Activated naive CD4-positive, alpha-beta T cell treated with anti-CD3 and anti-CD28 coated beads for 36 hours (primary cell): ENCODE measurements at regions of chr14 and their contacts with region 1.

Region 1: DNA sequence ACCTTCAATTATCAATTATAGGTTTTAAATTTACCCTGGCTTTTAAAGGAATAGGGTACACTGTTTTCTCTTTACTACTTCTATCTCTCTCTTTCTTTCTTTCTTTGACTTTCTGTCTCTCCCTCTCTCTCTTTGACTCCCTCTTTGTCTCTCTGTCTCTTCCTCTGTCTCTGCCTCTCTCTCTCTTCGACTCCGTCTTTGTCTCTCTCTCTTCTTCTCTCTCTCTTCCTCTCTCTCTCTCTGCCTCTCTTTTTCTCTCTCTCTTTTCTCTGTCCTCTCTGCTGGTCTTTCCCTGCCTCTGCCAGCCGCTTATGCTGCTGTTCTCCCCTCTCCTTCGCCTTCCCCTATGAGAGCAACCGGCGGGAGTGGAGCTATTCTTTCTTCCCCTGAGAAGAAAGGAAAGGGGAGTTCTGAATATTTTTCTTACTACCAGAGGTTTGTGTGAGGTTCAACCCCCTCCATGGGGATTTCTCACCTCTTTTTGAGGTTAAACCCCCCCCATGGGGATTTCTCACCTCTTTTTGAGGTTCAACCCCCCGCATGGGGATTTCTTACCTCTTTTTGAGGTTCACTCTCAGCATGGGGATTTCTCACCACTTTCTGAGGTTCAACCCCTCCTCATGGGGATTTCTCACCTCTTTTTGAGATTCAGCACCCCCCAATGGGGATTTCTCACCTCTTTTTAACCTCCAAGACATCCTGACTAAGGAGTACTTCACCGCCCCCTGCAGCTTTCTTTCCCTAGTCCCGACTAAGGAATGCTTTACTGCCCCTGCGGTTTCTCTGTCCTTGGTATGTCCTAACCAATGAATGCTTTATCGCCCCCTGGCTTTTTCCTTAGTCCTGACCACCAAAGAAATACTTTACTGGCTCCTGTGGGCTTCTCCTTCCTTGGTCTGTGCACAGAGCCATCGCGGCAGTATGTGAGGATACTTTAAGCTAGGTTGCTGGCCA is 27.4 kb upstream of the DDHD1 start:
- DNase-seq: peak; percentile 86
- H3K4me3 Mint-ChIP-seq: no peak overlapping the region
- H3K27ac Mint-ChIP-seq: peak overlapping the region; percentile 43
- H3K4me1 Mint-ChIP-seq: peaks cover 21% of the 10 kb centered on the region
- H3K27me3 Mint-ChIP-seq: no peaks in the 10 kb centered on the region

Region 2: GRCh38 chr14:52824507-52824906 is 356.0 kb before region 1 on chr14:
- CTCF ChIA-PET with region 1: no interaction called
- intact Hi-C with region 1: loop called (anchors 1 kb)
- DNase-seq: no peak
- H3K4me3 Mint-ChIP-seq: no peak overlapping the region
- H3K27ac Mint-ChIP-seq: no peak overlapping the region
- H3K4me1 Mint-ChIP-seq: peaks cover 2% of the 10 kb centered on the region
- H3K27me3 Mint-ChIP-seq: peaks cover 1% of the 10 kb centered on the region

Region 3: GRCh38 chr14:52950898-52951689 is 229.5 kb before region 1 on chr14 and contains the start of gene FERMT2:
- CTCF ChIA-PET with region 1: no interaction called
- intact Hi-C with region 1: loop called (anchors 1 kb)
- DNase-seq: peak; percentile 25
- H3K4me3 Mint-ChIP-seq: peak within 1 kb of the TSS; percentile 83
- H3K27ac Mint-ChIP-seq: no peak within 1 kb of the TSS
- H3K4me1 Mint-ChIP-seq: peaks cover 31% of the 10 kb centered on the region
- H3K27me3 Mint-ChIP-seq: peaks cover 49% of the 10 kb centered on the region
- total RNA-seq, gene FERMT2: 2.8 to 3.0 TPM

Region 4: DNA sequence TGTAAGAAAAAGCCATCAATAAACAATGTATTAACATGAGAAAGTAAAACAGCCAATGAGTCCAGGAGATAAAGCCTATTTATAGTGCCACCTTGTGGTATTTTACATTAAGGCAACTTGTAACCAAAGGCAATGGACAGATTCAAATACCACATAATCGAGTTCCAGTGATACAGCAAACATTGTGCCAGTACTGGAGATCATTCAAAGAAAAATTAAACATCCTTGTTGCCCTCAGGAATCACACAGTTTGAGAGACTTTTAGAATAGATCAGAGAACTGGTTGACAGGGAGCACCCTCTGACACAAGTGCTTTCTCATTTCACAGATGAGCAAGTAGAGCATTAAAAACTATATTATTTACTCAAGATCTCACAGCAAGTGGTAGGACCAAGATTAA is 125.5 kb before region 1 on chr14:
- CTCF ChIA-PET with region 1: no interaction called
- intact Hi-C with region 1: loop called (anchors 1 kb)
- DNase-seq: no peak
- H3K4me3 Mint-ChIP-seq: no peak overlapping the region
- H3K27ac Mint-ChIP-seq: no peak overlapping the region
- H3K4me1 Mint-ChIP-seq: peaks cover 3% of the 10 kb centered on the region
- H3K27me3 Mint-ChIP-seq: no peaks in the 10 kb centered on the region

Region 5: DNA sequence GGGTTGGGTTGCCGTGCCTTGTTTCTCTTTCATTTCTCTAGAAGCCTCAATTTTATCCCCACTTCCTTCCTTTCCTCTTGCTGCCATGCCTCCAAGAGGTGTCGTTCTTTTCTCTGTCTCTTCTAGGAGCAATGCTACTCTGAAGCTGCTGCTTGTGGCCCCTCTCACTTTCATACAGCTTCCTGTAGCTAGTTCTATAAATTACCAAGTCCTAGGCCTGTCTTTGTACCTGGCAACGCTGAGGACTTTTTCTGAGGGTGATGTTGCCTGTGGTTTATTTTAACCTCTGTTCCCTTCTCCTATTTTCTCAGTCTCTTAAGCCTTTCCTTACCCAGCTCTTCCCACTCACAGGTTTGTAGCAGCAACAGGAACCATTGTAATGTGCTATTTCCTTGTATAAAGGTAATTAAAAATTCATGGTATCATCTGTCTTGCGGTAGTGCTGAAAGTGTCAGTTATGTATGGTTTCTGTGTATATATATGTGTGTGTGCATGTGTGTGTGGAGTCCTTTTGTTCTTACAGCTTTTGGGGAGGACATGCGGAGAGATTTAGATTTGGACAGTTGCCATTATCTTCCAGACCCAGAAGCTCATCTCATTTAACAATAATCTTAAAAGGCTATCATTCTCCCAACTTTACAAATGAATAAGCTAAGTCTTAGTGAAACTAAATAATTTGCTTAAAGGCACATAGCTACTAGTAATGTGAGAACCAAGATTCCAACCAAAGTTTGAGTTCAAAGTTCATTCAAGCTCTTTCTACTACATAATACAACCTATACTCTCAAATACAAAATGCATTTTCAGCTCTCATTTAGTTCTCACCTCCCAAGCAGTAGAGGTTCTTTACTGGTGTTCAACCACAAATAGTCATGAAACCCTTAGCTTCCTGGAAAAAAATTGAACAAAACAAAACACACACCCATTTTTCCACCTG is 71.2 kb before region 1 on chr14:
- CTCF ChIA-PET with region 1: no interaction called
- intact Hi-C with region 1: loop called (anchors 1 kb)
- DNase-seq: peak; percentile 76
- H3K4me3 Mint-ChIP-seq: no peak overlapping the region
- H3K27ac Mint-ChIP-seq: no peak overlapping the region
- H3K4me1 Mint-ChIP-seq: peaks cover 20% of the 10 kb centered on the region
- H3K27me3 Mint-ChIP-seq: no peaks in the 10 kb centered on the region

Region 6: GRCh38 chr14:53161758-53162435 is 18.6 kb before region 1 on chr14:
- CTCF ChIA-PET with region 1: interaction called, 4 read pairs
- intact Hi-C with region 1: loop called (anchors 2 kb)
- DNase-seq: no peak
- H3K4me3 Mint-ChIP-seq: no peak overlapping the region
- H3K27ac Mint-ChIP-seq: no peak overlapping the region
- H3K4me1 Mint-ChIP-seq: peaks cover 7% of the 10 kb centered on the region
- H3K27me3 Mint-ChIP-seq: no peaks in the 10 kb centered on the region

Region 7: DNA sequence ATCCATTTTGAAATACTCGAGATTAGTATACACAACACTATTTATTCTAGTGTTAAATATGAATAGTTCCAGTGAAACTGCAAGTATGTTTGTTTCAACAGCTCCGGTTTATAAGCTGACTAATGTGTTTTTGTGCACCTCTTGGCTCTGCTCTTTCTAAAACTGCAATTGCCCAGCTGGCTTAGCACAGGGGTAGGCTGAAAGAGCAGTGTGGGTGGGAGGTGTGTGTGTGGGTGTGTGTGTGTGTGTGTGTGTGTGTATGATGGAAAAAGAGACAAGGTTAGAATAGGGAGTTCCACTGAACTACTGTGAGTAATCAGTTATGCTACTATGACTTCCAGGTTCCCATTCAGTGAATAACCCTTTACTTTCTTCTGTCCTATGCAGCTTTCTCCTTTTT is 10.4 kb after region 1 on chr14:
- CTCF ChIA-PET with region 1: interaction called, 7 read pairs
- intact Hi-C with region 1: loop called (anchors 1 kb)
- DNase-seq: peak; percentile 72
- H3K4me3 Mint-ChIP-seq: peak overlapping the region; percentile 41
- H3K27ac Mint-ChIP-seq: peak overlapping the region; percentile 22
- H3K4me1 Mint-ChIP-seq: peaks cover 12% of the 10 kb centered on the region
- H3K27me3 Mint-ChIP-seq: no peaks in the 10 kb centered on the region